ENCODE measurements at regions of chr9 and their contacts with region 1.

Region 1: DNA sequence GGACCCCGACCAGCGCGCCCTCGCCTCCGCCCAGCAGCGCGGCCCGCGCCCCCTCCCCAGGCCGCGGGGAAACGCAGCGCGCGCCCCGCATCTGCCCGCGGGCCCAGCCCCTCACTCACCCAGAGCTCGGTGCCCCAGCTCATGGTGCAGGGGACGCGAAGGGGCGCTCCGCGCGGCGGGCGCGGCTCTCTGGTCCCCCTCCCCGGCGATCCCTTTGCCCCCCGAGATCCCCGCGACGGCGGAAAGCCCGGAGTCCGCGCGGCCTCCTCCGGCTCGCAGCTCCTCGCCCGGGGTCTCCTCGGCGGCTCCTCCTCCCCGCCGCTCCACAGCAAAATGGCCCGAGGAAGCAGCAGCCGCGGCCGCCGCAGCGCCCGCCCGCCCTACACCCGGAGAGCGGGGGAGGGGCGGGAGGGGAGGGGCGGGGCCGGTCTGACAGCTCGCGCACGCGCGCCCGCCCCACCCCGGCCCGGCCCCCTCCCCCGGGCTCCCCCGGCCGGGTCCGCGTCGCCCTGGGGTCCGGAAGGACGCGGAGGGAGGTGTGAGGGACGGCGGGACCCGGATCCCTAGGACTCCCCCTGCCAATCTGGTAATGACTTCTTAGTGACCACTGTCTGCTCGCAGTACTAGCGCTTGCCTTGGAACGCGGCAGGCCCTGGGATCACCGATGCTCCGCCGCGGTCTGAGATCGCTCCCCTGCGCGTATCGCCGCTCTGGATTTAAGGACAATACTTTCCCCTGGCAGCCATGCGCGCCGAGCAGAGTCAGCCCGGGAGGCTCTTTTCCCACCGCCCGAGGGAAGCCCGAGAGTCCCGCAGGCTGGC is at the start of gene FNBP1:
- DNase-seq: peak; percentile 80
- H3K4me3 Mint-ChIP-seq: peak within 1 kb of the TSS; percentile 97
- H3K27ac Mint-ChIP-seq: peak within 1 kb of the TSS; percentile 96
- H3K4me1 Mint-ChIP-seq: peaks cover 39% of the 10 kb centered on the region
- H3K27me3 Mint-ChIP-seq: no peaks in the 10 kb centered on the region
- total RNA-seq, gene FNBP1: 358 and 359 TPM in 2 replicates

Region 2: DNA sequence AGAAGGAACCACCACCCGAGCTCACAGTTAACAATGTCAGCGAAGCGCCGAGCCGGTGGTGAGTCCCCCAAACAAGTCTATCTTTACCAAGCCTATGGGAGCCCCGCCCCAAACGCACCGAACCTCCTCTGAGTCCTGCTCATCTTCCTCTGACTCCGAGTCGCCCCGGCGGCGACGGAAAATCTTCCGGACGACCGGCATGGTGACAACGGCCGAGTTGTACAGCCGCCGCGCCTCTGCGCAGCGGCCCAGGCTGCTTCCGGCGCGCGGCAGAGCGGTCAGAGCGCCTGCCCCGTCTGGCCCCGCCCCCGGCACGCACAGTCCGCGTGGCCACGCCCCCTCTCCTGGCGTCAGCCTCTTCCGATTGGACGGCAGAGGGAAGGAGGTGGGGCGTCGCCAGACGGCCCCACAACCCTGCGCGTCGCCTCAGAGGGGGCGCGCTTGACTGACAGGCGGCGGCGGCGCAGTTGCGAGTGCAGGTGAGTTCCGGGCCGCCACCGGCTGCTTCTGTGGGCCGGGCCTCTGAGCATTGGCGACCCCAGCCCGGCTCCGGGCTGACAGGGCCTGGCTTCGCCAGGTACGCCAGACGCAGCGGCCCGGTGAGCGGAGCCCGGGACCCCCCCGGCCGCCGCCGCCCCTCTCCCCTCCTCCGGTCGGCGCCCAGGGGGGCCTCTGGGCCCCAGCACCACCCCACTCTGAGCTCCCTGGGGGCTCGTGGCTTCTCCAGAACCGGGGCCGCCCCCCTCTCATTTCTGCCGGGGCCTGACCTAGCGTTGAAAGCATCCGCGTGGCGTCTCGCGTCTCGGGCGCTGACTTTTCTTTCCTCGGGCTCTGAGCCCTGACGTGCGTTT is 207.8 kb before region 1 on chr9 and contains the starts of genes C9orf78 and USP20:
- intact Hi-C with region 1: loop called (anchors 5 kb)
- DNase-seq: peak; percentile 95
- H3K4me3 Mint-ChIP-seq: peak within 1 kb of the TSS; percentile 98
- H3K27ac Mint-ChIP-seq: peak within 1 kb of the TSS; percentile 98
- H3K4me1 Mint-ChIP-seq: peaks cover 46% of the 10 kb centered on the region
- H3K27me3 Mint-ChIP-seq: no peaks in the 10 kb centered on the region
- total RNA-seq, gene C9orf78: 54.4 and 59.6 TPM in 2 replicates
- total RNA-seq, gene USP20: 45.6 and 52.3 TPM in 2 replicates

Region 3: GRCh38 chr9:129932303-129933151 is 110.5 kb before region 1 on chr9:
- intact Hi-C with region 1: no loop called
- DNase-seq: no peak
- H3K4me3 Mint-ChIP-seq: peak overlapping the region; percentile 59
- H3K27ac Mint-ChIP-seq: peak overlapping the region; percentile 86
- H3K4me1 Mint-ChIP-seq: peaks cover 61% of the 10 kb centered on the region
- H3K27me3 Mint-ChIP-seq: no peaks in the 10 kb centered on the region

Region 4: DNA sequence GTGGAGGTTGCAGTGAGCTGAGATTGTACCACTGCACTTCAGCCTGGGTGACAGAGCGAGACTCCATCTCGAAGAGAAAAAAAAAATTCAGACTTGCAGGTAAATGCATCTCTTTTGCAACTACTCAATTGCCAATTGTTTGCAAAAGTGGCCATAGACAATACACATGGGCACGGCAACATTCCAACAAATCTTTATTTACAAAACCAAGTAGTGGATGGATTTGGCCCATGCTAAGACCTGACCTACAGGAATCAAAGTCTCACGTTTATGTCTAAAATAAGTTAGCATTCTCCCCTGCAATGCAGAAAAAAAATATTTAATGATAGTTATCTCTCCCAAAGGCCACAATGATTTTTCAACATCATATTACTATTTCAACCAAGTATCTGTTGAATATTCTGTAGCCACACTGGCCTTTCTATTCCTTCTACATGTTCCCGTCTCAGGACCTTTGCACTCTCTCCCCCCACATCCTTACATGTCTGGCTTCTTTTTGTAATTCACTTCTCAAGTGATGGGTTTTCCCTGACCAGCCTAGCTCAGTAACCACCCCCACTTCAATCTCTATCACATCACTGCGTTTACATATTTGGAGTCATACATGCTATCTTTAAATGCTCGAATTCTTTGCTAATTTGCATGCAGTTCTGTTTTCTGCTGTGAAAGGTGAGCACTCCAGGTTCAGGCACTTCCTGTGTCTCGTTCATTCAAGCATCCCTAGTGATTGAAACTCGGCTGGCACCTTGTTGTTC is 54.3 kb before region 1 on chr9:
- intact Hi-C with region 1: loop called (anchors 2 kb)
- DNase-seq: no peak
- H3K4me3 Mint-ChIP-seq: peak overlapping the region; percentile 50
- H3K27ac Mint-ChIP-seq: peak overlapping the region; percentile 87
- H3K4me1 Mint-ChIP-seq: peaks cover 46% of the 10 kb centered on the region
- H3K27me3 Mint-ChIP-seq: no peaks in the 10 kb centered on the region

Region 5: GRCh38 chr9:130053504-130054324 is 10.7 kb after region 1 on chr9 and contains the start of gene GPR107:
- intact Hi-C with region 1: loop called (anchors 1 kb)
- DNase-seq: peak; percentile 71
- H3K4me3 Mint-ChIP-seq: peak within 1 kb of the TSS; percentile 95
- H3K27ac Mint-ChIP-seq: peak within 1 kb of the TSS; percentile 89
- H3K4me1 Mint-ChIP-seq: peaks cover 20% of the 10 kb centered on the region
- H3K27me3 Mint-ChIP-seq: no peaks in the 10 kb centered on the region
- total RNA-seq, gene GPR107: 22.3 and 23.7 TPM in 2 replicates

Region 6: GRCh38 chr9:131277910-131278701 is 1235.1 kb after region 1 on chr9:
- intact Hi-C with region 1: loop called (anchors 10 kb)
- DNase-seq: peak; percentile 67
- H3K4me3 Mint-ChIP-seq: peak overlapping the region; percentile 85
- H3K27ac Mint-ChIP-seq: peak overlapping the region; percentile 91
- H3K4me1 Mint-ChIP-seq: peaks cover 19% of the 10 kb centered on the region
- H3K27me3 Mint-ChIP-seq: peaks cover 14% of the 10 kb centered on the region

Measured in activated T-helper 2 cell treated with anti-CD3 and anti-CD28 coated beads, Interferon-gamma antibody, Interleukin-2, Interleukin-4, amounts not matched to agents 10 μg/mL and 5 μg/mL and 100 μg/mL, durations not matched to agents 14 hours and 24 hours and 36 hours (primary cell).